ENCODE measurements at regions of chr12 and their contacts with region 1.

Region 1: GRCh38 chr12:12551115-12551514 is 11.5 kb downstream of the DUSP16 start:
- DNase-seq: no peak
- ATAC-seq: no peak
- H3K4me3 ChIP-seq: no peak overlapping the region
- H3K27ac ChIP-seq: no peak overlapping the region
- H3K4me1 ChIP-seq: peaks cover 38% of the 10 kb centered on the region
- H3K27me3 ChIP-seq: no peaks in the 10 kb centered on the region
- CTCF ChIP-seq: no peak
- POLR2A ChIP-seq: no peak

Region 2: GRCh38 chr12:12214635-12215131 is 336.4 kb before region 1 on chr12:
- intact Hi-C with region 1: no loop called
- DNase-seq: no peak
- ATAC-seq: no peak
- H3K4me3 ChIP-seq: no peak overlapping the region
- H3K27ac ChIP-seq: peak overlapping the region in 1 of 4 donors; percentile 27
- H3K4me1 ChIP-seq: peaks cover 62% of the 10 kb centered on the region
- H3K27me3 ChIP-seq: no peaks in the 10 kb centered on the region
- CTCF ChIP-seq: no peak
- POLR2A ChIP-seq: no peak

Region 3: DNA sequence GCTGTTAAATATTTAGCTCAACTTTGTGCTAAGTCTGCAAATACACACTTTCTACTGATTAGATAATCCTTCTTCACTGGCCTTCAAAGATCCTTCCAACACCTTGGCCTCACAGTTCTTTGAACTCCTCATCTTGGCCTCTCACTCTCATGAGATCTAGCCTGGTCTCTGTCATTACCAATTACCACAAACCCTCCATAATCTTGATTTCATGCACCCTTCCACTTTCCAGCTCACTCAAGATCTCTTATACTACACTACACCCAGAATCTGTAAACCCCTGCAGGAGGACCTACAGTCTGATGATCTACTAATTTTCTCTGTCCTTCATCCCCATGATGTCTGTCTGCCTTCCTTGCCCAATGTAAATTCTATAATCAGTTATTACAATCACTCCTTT is 59.5 kb before region 1 on chr12:
- intact Hi-C with region 1: loop called (anchors 10 kb)
- DNase-seq: no peak
- ATAC-seq: no peak
- H3K4me3 ChIP-seq: no peak overlapping the region
- H3K27ac ChIP-seq: peak overlapping the region in 2 of 4 donors; percentile 7 to 9
- H3K4me1 ChIP-seq: peaks cover 64% of the 10 kb centered on the region
- H3K27me3 ChIP-seq: no peaks in the 10 kb centered on the region
- CTCF ChIP-seq: no peak
- POLR2A ChIP-seq: no peak

Measured in body of pancreas (tissue), 4 donors.